Ovary (tissue), 10 donors: ENCODE measurements at regions of chr15 and their contacts with region 1.

Region 1: GRCh38 chr15:57375827-57376695 is at the start of gene CGNL1:
- DNase-seq: peak; percentile 51 to 78 (median 66)
- H3K4me3 ChIP-seq: peak within 1 kb of the TSS; percentile 87
- H3K27ac ChIP-seq: peak within 1 kb of the TSS in 1 of 2 donors; percentile 48
- H3K4me1 ChIP-seq: peaks cover 4% of the 10 kb centered on the region
- H3K27me3 ChIP-seq: no peaks in the 10 kb centered on the region
- CTCF ChIP-seq: no peak
- EP300 ChIP-seq: no peak
- POLR2A ChIP-seq: peak; percentile 10
- total RNA-seq, gene CGNL1: 7.8 to 26.1 (median 13.6) TPM

Region 2: GRCh38 chr15:57476533-57476975 is 100.5 kb after region 1 on chr15:
- intact Hi-C with region 1: no loop called
- DNase-seq: no peak
- H3K4me3 ChIP-seq: no peak overlapping the region
- H3K27ac ChIP-seq: no peak overlapping the region
- H3K4me1 ChIP-seq: no peaks in the 10 kb centered on the region
- H3K27me3 ChIP-seq: no peaks in the 10 kb centered on the region
- CTCF ChIP-seq: no peak
- EP300 ChIP-seq: no peak
- POLR2A ChIP-seq: no peak

Region 3: DNA sequence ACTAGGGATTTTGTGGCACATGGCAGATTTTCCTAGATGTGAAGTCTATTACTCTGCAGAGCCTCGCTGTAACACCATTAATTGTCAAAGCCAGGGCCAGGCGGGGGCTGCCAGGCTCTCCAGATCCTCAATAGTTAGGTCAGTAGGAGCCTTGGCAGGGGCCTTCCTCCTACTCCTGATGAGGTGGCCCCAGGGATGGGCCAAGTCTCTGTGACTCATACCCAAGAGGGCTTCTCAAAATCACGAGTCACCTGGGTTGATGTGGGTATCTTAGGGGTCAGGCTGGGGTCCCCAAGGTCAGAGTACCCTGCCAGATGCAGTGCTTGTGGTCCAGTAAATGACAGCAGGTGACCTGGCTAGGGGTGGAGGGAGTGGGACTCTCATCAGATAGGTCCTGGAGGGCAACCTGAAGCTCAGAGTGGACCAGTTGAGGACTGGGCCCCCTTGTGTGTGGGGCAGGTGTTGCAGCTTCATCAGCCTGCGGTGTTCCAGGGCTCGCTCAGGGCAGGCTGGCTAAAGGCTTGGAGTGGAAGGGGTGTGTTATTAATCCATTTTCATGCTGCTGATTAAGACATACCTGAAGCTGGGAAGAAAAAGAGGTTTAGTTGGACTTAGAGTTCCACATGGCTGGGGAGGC is 127.1 kb after region 1 on chr15:
- intact Hi-C with region 1: loop called in 1 of 4 experiments (anchors 5 kb)
- DNase-seq: no peak
- H3K4me3 ChIP-seq: no peak overlapping the region
- H3K27ac ChIP-seq: peak overlapping the region in 1 of 2 donors; percentile 12
- H3K4me1 ChIP-seq: peaks cover 14% of the 10 kb centered on the region
- H3K27me3 ChIP-seq: no peaks in the 10 kb centered on the region
- CTCF ChIP-seq: no peak
- EP300 ChIP-seq: no peak
- POLR2A ChIP-seq: no peak